ENCODE measurements at regions of chr5 and their contacts with region 1.

Region 1: DNA sequence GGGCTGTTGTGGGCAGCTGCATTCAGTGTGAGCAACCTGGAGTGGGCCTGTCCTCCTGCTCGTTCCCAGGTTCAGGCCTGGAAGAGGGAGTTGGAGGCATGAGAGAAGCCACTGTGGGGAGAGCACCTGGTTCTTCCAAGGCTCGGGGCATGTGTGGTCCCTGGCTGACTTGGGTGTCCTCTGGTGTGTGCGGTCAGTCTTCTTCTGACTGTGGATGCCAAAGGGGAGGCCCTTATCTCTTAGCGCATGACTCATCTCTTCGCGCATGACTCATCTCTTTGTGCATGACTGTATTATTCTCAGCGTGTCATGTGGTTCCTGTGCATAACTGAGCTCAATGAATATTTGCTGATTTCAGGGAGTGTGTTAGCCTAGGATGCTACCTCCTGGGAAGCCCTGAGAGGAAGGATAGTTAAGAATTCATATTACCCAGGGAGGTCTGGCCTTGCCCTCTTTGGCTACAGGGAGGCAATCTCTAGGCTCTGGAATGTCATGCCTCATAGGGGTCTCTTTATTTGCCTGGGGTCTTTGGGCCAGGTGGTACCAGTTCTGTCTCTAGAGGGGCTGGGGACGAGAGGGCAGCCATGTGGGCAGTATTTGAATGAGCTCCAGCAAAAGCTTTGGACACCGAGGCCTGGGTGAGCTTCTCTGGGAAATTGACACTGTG is 188.7 kb downstream of the HSPA4 start:
- DNase-seq: peak; percentile 92 to 95 (median 93)
- ATAC-seq: peak; percentile 98
- H3K4me3 ChIP-seq: 0 out of 2 replicates have a peak overlapping the region, but pooled peaks have one; percentile 1
- H3K27ac ChIP-seq: peak overlapping the region; percentile 79
- H3K4me1 ChIP-seq: peaks cover 25 to 30% of the 10 kb centered on the region in 2 experiments
- H3K27me3 ChIP-seq: peaks cover 0 to 7% of the 10 kb centered on the region in 2 experiments; a peak in 1 of 5 replicates
- CTCF ChIP-seq: 0 out of 6 replicates have a peak, but pooled peaks of 1 of the 3 experiments have one; percentile 7
- EP300 ChIP-seq: peak; percentile 91
- POLR2A ChIP-seq: peak; percentile 60; the same call in 1 of the 2 replicates
- RAD21 ChIP-seq: 0 out of 4 replicates have a peak, but pooled peaks of 1 of the 2 experiments have one; percentile 19

Region 2: DNA sequence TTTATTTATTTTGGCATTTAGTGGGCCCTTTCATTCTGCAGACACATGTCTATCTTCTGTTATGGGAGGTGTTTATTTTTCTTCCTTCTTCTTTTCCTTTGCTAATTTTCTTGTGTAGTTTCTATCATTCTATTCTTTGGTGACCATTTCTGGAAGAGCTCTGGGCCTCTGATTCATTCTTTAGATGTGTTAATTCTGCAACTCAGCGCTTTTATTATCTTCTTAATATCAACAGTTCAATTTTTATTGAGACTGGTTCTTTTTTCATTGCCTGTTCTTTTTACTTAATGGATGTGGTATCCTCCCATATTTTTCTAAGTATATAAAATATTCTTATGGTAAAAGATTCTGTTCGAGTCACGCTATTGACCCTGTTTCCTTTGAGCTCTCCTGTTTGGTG is 76.7 kb before region 1 on chr5:
- CTCF ChIA-PET with region 1: no interaction called
- POLR2A ChIA-PET with region 1: no interaction called
- in situ Hi-C with region 1: no loop called
- intact Hi-C with region 1: no loop called
- DNase-seq: no peak
- ATAC-seq: no peak
- H3K4me3 ChIP-seq: no peak overlapping the region
- H3K27ac ChIP-seq: no peak overlapping the region
- H3K4me1 ChIP-seq: no peaks in the 10 kb centered on the region
- H3K27me3 ChIP-seq: no peaks in the 10 kb centered on the region; a peak in 1 of 5 replicates
- CTCF ChIP-seq: no peak
- EP300 ChIP-seq: no peak
- POLR2A ChIP-seq: no peak
- RAD21 ChIP-seq: no peak

Region 3: GRCh38 chr5:133199417-133200178 is 41.0 kb before region 1 on chr5:
- CTCF ChIA-PET with region 1: no interaction called
- POLR2A ChIA-PET with region 1: no interaction called
- in situ Hi-C with region 1: no loop called
- intact Hi-C with region 1: no loop called
- DNase-seq: no peak
- ATAC-seq: peak; percentile 46
- H3K4me3 ChIP-seq: no peak overlapping the region
- H3K27ac ChIP-seq: no peak overlapping the region
- H3K4me1 ChIP-seq: no peaks in the 10 kb centered on the region
- H3K27me3 ChIP-seq: peaks cover 40 to 82% of the 10 kb centered on the region in 2 experiments
- CTCF ChIP-seq: no peak
- EP300 ChIP-seq: no peak
- POLR2A ChIP-seq: no peak
- RAD21 ChIP-seq: no peak

Region 4: GRCh38 chr5:133225671-133226152 is 14.8 kb before region 1 on chr5:
- CTCF ChIA-PET with region 1: no interaction called
- POLR2A ChIA-PET with region 1: interaction called, 27 read pairs
- in situ Hi-C with region 1: no loop called
- intact Hi-C with region 1: no loop called
- DNase-seq: no peak
- ATAC-seq: no peak
- H3K4me3 ChIP-seq: no peak overlapping the region
- H3K27ac ChIP-seq: no peak overlapping the region
- H3K4me1 ChIP-seq: 0 out of 5 replicates have a peak, but pooled peaks cover 0 to 2% of the 10 kb centered on the region in 2 experiments
- H3K27me3 ChIP-seq: peaks cover 7 to 40% of the 10 kb centered on the region in 2 experiments; a peak in 4 of 5 replicates
- CTCF ChIP-seq: no peak
- EP300 ChIP-seq: no peak
- POLR2A ChIP-seq: no peak
- RAD21 ChIP-seq: no peak

Measured in K562 (cell line).